ENCODE measurements at regions of chr2 and their contacts with region 1.

Region 1: DNA sequence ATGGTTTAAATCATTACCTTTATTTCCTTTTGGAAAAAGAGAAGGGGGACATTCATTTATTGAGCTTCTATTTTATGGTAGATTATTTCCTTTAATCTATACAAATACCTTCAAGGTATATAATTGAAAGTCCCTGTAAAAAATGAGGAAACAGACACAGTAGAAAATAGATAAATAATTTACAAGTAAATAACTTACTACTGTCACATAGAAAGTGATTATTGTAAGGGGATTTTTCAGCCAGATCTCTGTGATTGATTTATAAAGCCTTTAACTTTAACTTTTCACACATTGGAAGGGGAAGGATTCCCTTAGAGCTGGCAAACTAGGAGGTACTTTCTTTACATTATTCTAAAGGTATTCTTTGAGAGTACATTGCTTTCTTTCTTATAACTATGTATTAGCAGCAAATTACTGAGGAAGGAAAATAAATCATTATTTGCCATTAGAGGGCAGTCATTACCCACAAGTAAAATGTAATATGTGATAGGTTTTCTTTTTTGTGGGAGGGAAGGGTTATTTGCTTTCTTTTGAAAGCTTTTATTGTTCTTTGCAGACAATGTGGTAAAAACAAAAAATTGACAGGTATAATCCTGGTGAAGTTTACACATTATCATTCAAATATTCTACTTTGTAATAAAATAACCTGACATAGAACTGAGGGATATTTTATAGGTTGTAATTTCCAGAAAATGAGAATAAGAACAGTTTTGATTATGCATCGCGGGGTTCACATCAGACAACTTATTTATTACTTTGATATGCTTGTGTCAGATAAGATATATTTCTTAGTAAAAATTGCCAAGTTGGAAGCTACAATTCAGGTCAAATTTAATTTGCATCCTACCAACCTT is 24.8 kb upstream of the RPE start:
- DNase-seq: peak; percentile 49
- CTCF ChIP-seq: peak; percentile 20

Region 2: GRCh38 chr2:209936106-209936666 is 41.4 kb before region 1 on chr2:
- CTCF ChIA-PET with region 1: no interaction called
- POLR2A ChIA-PET with region 1: no interaction called
- DNase-seq: no peak
- CTCF ChIP-seq: no peak

Region 3: DNA sequence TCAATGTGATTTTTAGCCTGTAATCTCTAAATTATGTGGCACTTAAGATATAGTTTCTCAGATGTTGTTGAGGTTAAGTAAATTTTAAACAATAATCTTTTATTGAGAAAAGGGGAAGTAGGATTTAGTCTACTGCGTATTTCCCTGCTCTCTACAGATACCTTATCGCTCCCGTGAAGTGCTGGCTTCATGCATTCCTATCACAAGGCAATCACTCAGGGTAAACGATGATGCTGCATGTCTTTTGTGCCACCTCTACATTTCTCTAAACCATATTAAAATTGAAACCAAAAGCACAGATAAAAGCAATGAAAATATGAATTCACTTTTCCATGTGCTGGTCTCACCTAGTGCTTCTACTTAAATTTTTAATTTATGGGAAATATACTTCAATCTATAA is 10.4 kb after region 1 on chr2:
- CTCF ChIA-PET with region 1: interaction called, 11 read pairs
- POLR2A ChIA-PET with region 1: no interaction called
- DNase-seq: no peak
- CTCF ChIP-seq: no peak

Region 4: DNA sequence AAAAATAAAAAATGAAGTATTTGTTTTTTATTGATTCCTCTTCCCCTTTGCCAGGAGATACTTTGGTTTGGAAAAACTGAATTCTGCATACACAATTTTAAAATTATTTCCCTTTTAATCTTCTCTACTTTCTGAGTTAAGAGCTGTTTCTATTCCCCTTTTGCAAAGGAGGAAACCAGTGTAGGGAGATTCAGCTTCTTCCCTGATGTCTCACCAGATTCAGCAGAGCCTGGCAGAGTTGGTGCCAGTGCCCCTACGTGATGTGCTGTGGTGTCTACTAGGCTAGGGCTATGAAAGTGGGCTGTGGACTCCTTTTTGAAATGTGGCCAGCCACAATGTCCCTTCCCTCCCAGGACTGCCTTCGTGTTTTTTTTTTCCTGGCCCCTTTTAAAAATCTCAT is 27.3 kb after region 1 on chr2:
- CTCF ChIA-PET with region 1: no interaction called
- POLR2A ChIA-PET with region 1: no interaction called
- DNase-seq: no peak
- CTCF ChIP-seq: no peak

Measured in GM10248 (cell line).